PC-3 (cell line): ENCODE measurements at regions of chr1 and their contacts with region 1.

Region 1: DNA sequence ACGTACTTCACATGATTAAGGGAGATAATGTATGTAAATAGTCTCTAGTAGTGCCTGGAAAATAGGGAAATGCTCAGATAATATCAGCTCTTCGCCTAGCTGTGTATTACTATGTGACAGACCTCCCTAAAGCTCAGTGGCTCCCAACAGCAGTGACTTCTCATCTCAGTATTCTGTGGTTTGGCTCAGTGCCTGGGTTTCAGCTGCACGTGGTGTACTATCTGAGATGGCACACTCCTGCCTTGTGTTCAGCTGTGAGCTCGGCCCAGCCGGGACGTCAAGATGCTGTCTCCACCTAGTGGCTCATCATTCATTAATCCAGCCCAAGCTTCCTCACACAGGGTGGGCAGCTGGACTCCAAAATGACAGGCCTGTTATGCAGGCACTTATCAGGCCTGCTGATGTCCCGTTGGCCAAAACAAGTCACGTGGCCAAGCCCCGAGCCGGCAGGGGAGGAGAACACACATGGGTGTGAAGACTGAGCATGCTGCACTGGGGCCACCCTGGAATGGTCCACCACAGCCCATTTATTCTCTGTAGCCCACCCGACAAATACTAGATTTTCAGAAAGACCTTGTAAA is 17.8 kb downstream of the SLFNL1 start:
- DNase-seq: peak; percentile 99
- ATAC-seq: peak; percentile 99
- H3K4me3 ChIP-seq: no peak overlapping the region
- H3K27ac ChIP-seq: peak overlapping the region; percentile 7; the same call in 1 of the 2 replicates
- H3K4me1 ChIP-seq: peaks cover 18% of the 10 kb centered on the region
- H3K27me3 ChIP-seq: no peaks in the 10 kb centered on the region
- CTCF ChIP-seq: peak; percentile 80

Region 2: DNA sequence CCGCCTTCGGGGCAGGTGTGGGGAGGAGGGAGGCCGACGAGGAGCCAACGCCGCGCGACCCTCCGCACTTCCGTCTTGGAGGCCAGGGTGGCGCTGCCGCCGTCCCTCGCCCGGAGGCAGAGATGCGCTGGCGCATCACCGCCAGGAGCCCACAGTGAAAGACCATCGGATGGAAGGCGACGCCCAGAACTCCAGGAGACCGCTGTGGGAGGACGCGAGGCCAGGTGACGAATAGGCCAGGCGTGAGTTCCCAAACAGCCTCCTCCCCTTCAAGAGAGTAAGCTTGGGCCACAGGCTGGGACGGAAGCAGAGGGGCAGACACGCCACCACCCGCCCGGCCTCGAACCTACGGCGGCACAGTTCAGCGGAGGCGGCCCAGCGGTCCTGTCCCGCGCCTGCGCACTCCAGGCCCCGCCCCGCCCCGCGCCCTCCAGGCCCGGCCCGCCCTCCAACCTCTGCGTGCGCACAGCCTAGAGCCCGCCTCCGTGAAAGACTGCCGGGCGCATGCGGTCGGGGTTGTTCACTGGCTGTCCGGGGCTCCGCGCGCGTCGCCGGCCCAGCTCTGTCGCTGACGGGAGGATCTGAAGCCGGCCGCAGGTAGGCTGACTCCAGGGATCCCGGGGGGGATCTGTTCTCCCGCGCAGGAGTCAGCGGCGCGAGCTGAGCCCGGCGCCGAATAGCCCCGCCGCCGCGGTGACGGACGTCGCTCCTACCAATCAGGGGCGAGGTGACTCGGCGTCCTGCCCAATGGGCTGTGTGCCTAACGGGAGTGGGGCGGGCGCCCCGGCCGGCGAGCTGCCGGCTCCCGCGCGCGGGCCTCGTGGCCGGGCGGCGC is 24.3 kb before region 1 on chr1 and contains the start of gene CTPS1:
- CTCF ChIA-PET with region 1: interaction called, 4 read pairs
- POLR2A ChIA-PET with region 1: interaction called, 3 read pairs
- intact Hi-C with region 1: loop called (anchors 2 kb)
- DNase-seq: peak; percentile 93
- ATAC-seq: peak; percentile 83
- H3K4me3 ChIP-seq: peak within 1 kb of the TSS; percentile 80
- H3K27ac ChIP-seq: peak within 1 kb of the TSS; percentile 91
- H3K4me1 ChIP-seq: peaks cover 31% of the 10 kb centered on the region
- H3K27me3 ChIP-seq: no peaks in the 10 kb centered on the region
- CTCF ChIP-seq: peak; percentile 20; the same call in 1 of the 2 replicates
- total RNA-seq, gene CTPS1: 63.4 and 122 TPM in 2 replicates

Region 3: DNA sequence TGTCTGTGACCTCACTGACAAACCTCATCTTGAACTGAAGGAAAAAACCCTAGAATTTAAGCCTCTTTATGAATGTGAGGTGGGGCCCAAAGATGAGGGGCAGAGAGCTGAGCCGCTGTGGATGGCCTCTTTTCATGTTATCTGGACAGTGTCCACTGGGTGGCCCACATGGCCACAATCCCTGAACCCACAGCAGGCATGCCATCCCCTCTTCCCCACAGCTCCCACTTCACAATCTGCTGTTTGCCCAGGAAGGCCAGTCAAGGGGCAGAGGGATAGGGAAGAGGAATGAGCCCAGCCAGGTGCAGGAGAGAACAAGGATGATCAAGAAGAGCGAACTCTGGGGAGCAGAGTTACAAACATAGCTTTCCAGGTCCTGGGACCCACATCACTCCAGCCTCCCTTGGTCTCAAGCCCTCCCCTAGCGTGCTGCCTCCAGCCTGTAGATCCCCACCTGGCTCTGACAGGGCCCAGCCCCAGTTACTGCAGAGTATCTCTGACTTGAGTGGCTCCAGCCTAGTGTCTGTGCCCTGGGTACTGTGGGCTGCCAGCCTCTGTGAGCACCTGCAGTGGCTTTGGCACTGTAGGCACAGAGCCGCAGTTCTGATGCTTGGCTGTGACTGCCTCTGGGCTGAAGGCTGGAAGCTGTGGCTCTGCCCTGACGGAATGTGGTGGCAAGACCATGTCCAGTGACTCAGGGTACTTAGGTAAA is 19.7 kb after region 1 on chr1:
- CTCF ChIA-PET with region 1: no interaction called
- POLR2A ChIA-PET with region 1: no interaction called
- intact Hi-C with region 1: no loop called
- DNase-seq: peak; percentile 30
- ATAC-seq: peak; percentile 49
- H3K4me3 ChIP-seq: no peak overlapping the region
- H3K27ac ChIP-seq: no peak overlapping the region
- H3K4me1 ChIP-seq: no peaks in the 10 kb centered on the region
- H3K27me3 ChIP-seq: no peaks in the 10 kb centered on the region
- CTCF ChIP-seq: peak; percentile 52

Region 4: GRCh38 chr1:41101950-41102607 is 98.3 kb after region 1 on chr1:
- CTCF ChIA-PET with region 1: no interaction called
- POLR2A ChIA-PET with region 1: no interaction called
- intact Hi-C with region 1: no loop called
- DNase-seq: peak; percentile 88
- ATAC-seq: peak; percentile 97
- H3K4me3 ChIP-seq: no peak overlapping the region
- H3K27ac ChIP-seq: 0 out of 2 replicates have a peak overlapping the region, but pooled peaks have one; percentile 7
- H3K4me1 ChIP-seq: peaks cover 18% of the 10 kb centered on the region
- H3K27me3 ChIP-seq: no peaks in the 10 kb centered on the region
- CTCF ChIP-seq: no peak